ENCODE measurements at regions of chr7 and their contacts with region 1.

Region 1: DNA sequence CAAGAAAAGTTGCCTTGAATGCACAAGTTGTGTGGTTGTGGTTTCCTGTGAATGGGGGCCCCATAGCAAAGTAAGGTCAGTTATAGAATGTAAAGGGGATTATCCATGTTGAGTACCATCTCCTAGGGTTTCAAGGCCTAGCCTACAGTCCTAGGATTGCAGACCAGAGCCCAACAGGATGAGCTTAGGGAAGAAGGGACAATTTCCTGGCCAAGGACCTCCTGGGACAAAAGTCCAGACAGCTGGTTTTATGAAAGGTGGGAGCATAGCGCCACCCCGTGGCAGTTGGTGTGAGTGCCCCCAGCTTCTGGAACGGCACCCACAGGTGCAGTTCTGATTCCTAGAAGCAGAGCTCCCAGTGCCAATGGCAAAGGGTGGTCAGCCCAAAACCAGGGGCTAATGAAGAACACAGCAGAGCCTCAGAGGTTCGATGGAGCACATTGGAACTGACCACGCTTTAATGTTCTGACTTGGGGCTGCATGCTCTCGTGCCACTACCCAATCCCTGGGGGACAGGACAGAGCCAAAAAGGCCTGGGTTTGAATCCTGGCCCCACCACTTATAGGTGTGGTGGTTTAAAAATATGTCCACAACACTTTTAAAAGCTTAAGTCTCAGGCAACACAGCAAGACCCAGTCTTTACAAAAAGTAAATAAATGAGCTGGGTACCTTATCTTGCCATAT is 25.8 kb upstream of the TMEM120A start:
- DNase-seq: peak; percentile 84
- H3K4me3 ChIP-seq: no peak overlapping the region
- H3K27ac ChIP-seq: no peak overlapping the region
- H3K4me1 ChIP-seq: no peaks in the 10 kb centered on the region
- H3K27me3 ChIP-seq: no peaks in the 10 kb centered on the region
- CTCF ChIP-seq: peak; percentile 82 to 90 (median 89)
- POLR2A ChIP-seq: no peak

Region 2: DNA sequence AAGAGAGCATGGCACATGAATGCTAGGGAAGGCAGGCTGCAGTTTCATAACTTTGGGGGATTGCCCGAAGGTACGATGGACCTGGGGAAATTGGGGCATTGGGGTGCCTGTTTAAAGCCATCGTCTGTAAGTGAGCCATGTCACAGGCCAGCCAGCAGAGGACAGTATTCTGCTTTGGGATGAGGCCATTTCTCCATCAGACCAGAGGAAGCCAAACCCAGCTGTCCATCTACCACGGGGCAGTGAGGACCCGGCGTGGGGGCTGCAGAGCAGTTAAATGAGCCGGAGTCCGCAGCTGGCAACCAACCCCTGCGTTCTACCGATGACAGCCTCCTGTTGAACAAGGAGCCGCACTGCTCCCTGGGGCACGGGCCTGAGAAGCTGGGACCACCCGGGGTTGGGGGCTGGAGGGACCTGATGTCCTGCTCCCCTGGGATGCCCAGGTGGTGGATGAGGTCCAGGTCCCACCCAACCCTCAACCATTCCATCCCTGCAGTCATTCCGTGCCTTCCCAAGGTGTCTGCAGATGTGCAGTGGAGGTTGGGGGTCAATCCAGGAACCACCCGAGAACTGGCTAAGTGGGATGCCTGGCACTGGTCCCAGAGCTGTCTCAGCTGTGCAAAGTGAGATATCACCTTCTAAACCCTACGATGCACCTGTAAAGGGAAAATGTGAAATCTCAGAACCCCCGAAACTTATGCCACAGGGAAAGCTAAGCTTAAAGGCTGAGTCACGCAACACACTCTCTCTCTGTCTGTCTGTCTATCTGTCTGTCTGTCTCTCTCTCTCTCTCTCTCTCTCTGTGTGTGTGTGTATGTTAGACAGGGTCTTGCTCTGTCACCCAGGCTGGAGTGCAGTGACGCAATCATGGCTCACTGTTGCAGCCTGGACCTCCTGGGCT is 153.4 kb before region 1 on chr7:
- intact Hi-C with region 1: loop called (anchors 10 kb)
- DNase-seq: peak; percentile 69
- H3K4me3 ChIP-seq: no peak overlapping the region
- H3K27ac ChIP-seq: no peak overlapping the region
- H3K4me1 ChIP-seq: peaks cover 5% of the 10 kb centered on the region
- H3K27me3 ChIP-seq: no peaks in the 10 kb centered on the region
- CTCF ChIP-seq: peak; percentile 58 to 86 (median 83)
- POLR2A ChIP-seq: no peak